IMR-90 (cell line): ENCODE measurements at regions of chr1 and their contacts with region 1.

Region 1: DNA sequence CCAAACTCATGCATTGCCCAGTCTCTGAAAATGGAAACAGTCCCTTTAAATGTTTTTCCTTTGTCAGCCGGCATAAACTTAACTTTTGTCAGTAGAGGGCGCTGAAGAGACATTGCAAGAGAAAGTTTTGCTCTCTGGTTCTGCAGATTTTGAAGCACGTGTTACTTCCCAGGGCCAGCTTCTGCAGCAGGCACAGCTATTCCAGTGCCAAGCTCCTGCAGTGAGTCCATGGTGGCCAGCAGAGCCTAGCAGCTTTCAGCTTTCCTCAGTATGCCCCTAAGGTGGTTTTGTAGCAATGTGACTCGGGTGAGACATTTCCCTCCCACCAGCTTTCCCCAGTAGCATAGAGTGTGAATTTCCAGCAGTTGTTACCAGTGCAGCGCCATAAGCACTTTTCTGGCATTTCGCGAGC is 2.6 kb upstream of the IFI44L start:
- DNase-seq: peak; percentile 85
- ATAC-seq: peak; percentile 71
- H3K4me3 ChIP-seq: no peak overlapping the region
- H3K27ac ChIP-seq: no peak overlapping the region
- H3K4me1 ChIP-seq: peaks cover 2% of the 10 kb centered on the region
- H3K27me3 ChIP-seq: no peaks in the 10 kb centered on the region
- CTCF ChIP-seq: peak; percentile 85
- POLR2A ChIP-seq: no peak
- RAD21 ChIP-seq: peak; percentile 74

Region 2: GRCh38 chr1:78664763-78665162 is 47.1 kb after region 1 on chr1:
- CTCF ChIA-PET with region 1: interaction called, 12 read pairs
- POLR2A ChIA-PET with region 1: no interaction called
- dilution Hi-C with region 1: no loop called
- in situ Hi-C with region 1: no loop called
- intact Hi-C with region 1: no loop called
- DNase-seq: peak; percentile 9
- ATAC-seq: no peak
- H3K4me3 ChIP-seq: no peak overlapping the region
- H3K27ac ChIP-seq: no peak overlapping the region
- H3K4me1 ChIP-seq: no peaks in the 10 kb centered on the region
- H3K27me3 ChIP-seq: no peaks in the 10 kb centered on the region
- CTCF ChIP-seq: no peak
- POLR2A ChIP-seq: no peak
- RAD21 ChIP-seq: no peak

Region 3: DNA sequence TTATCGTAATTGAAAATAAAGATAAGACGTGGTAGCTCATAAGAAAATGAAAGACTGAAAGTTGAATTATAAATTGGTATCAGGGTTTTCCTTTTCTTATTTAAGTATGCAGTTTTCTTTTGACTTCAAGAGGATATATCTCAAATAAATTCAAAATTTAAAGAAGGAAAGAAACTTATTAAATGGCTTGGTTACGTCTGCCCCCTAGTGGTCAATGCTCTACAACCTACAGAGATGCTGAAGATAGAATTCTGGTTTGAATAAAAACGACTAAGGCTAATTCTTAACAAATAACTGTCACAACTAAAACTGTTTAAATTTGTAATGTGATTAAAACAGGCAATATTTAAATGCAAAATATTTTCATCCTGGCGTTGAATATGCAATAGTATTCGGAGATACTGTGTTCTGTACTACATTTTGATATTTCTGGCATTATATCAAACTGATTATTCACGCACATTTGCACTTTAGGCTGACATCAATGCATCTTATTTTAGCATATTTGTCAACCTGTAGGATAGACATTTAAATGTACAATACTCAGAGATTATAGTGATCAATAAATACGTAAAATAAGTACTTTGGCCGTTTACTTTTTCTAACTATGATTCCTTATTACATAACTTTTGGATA is 58.8 kb after region 1 on chr1:
- CTCF ChIA-PET with region 1: interaction called, 12 read pairs
- POLR2A ChIA-PET with region 1: no interaction called
- dilution Hi-C with region 1: no loop called
- in situ Hi-C with region 1: no loop called
- intact Hi-C with region 1: loop called (anchors 1 kb)
- DNase-seq: peak; percentile 78
- ATAC-seq: peak; percentile 65
- H3K4me3 ChIP-seq: no peak overlapping the region
- H3K27ac ChIP-seq: no peak overlapping the region
- H3K4me1 ChIP-seq: no peaks in the 10 kb centered on the region
- H3K27me3 ChIP-seq: no peaks in the 10 kb centered on the region; the same call in 1 of the 2 replicates
- CTCF ChIP-seq: peak; percentile 83
- POLR2A ChIP-seq: no peak
- RAD21 ChIP-seq: peak; percentile 80

Region 4: GRCh38 chr1:78722947-78723346 is 105.3 kb after region 1 on chr1:
- CTCF ChIA-PET with region 1: no interaction called
- POLR2A ChIA-PET with region 1: no interaction called
- dilution Hi-C with region 1: no loop called
- in situ Hi-C with region 1: no loop called
- intact Hi-C with region 1: no loop called
- DNase-seq: peak; percentile 36
- ATAC-seq: peak; percentile 73
- H3K4me3 ChIP-seq: no peak overlapping the region
- H3K27ac ChIP-seq: no peak overlapping the region
- H3K4me1 ChIP-seq: no peaks in the 10 kb centered on the region; the same call in 1 of the 2 replicates
- H3K27me3 ChIP-seq: no peaks in the 10 kb centered on the region
- CTCF ChIP-seq: no peak
- POLR2A ChIP-seq: no peak
- RAD21 ChIP-seq: no peak

Region 5: GRCh38 chr1:78831731-78832360 is 214.2 kb after region 1 on chr1:
- CTCF ChIA-PET with region 1: interaction called, 5 read pairs
- POLR2A ChIA-PET with region 1: no interaction called
- dilution Hi-C with region 1: no loop called
- in situ Hi-C with region 1: no loop called
- intact Hi-C with region 1: loop called (anchors 5 kb)
- DNase-seq: peak; percentile 96
- ATAC-seq: peak; percentile 92
- H3K4me3 ChIP-seq: no peak overlapping the region
- H3K27ac ChIP-seq: no peak overlapping the region
- H3K4me1 ChIP-seq: peaks cover 7% of the 10 kb centered on the region; the same call in 1 of the 2 replicates
- H3K27me3 ChIP-seq: no peaks in the 10 kb centered on the region
- CTCF ChIP-seq: no peak
- POLR2A ChIP-seq: no peak
- RAD21 ChIP-seq: no peak

Region 6: DNA sequence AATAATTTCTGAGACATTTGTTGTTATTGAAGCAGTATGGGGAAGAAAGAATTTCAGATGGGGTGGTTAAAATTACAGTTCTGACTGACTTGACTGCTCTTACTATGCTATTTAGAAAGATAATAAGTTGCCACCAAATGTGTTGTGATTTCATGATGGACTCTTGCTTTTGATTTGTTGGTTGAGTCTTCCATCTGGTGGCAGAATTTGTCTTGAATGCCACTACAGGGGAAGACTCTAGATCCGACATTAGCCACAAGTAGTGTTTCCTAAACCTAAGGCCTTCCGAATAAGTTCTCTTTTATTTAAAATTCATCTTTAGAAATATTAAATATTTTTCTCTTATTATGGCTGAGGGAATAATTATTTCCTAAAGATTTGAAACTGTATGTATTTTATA is 579.8 kb after region 1 on chr1:
- CTCF ChIA-PET with region 1: no interaction called
- POLR2A ChIA-PET with region 1: no interaction called
- dilution Hi-C with region 1: no loop called
- in situ Hi-C with region 1: no loop called
- intact Hi-C with region 1: loop called (anchors 5 kb)
- DNase-seq: peak; percentile 38
- ATAC-seq: no peak
- H3K4me3 ChIP-seq: no peak overlapping the region
- H3K27ac ChIP-seq: no peak overlapping the region
- H3K4me1 ChIP-seq: peaks cover 2% of the 10 kb centered on the region
- H3K27me3 ChIP-seq: no peaks in the 10 kb centered on the region
- CTCF ChIP-seq: peak; percentile 46
- POLR2A ChIP-seq: no peak
- RAD21 ChIP-seq: peak; percentile 51